H1 (cell line): ENCODE measurements at regions of chr14 and their contacts with region 1.

Region 1: DNA sequence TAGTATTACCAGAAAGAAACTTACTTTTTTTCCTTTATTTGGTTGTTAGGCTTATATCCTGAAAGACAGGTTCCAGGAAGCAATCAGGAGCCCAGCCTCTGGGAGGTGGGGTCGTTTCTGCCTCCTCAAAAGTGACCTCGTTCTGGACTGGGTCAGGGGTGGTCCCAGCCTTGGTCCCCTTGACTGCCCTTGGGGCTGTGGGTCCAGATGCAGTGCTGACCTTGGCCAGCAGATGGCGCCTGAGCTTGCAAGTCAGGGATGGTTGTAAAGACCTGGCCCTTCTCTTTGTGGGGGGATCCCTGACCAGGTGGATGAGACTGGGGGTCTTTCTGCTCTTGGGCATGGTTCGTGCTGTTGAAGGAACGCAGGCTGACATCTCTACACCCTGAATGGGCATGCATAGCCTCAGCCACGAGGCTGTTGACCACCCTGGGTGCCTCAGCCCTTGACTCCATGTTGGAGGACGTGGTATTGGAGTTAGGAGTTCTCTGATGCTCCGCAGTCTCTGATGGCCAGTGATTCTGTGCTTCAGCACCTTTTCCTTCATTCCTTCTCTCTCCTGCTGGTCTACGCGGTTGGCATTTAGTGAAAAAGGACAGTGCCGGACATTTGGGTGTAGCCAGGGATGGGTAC is 62.4 kb downstream of the ADCK1 start:
- DNase-seq: peak; percentile 77 to 99
- H3K4me3 ChIP-seq: no peak overlapping the region
- H3K27ac ChIP-seq: no peak overlapping the region
- H3K4me1 ChIP-seq: no peaks in the 10 kb centered on the region
- H3K27me3 ChIP-seq: no peaks in the 10 kb centered on the region
- CTCF ChIP-seq: peak; percentile 88 to 99 (median 99)
- EP300 ChIP-seq: no peak
- POLR2A ChIP-seq: no peak
- RAD21 ChIP-seq: peak; percentile 90 to 92

Region 2: GRCh38 chr14:77825895-77826519 is 36.3 kb before region 1 on chr14:
- CTCF ChIA-PET with region 1: interaction called, 12 read pairs
- POLR2A ChIA-PET with region 1: no interaction called
- DNase-seq: no peak
- H3K4me3 ChIP-seq: no peak overlapping the region
- H3K27ac ChIP-seq: no peak overlapping the region
- H3K4me1 ChIP-seq: no peaks in the 10 kb centered on the region
- H3K27me3 ChIP-seq: no peaks in the 10 kb centered on the region
- CTCF ChIP-seq: no peak
- EP300 ChIP-seq: no peak
- POLR2A ChIP-seq: no peak
- RAD21 ChIP-seq: no peak

Region 3: DNA sequence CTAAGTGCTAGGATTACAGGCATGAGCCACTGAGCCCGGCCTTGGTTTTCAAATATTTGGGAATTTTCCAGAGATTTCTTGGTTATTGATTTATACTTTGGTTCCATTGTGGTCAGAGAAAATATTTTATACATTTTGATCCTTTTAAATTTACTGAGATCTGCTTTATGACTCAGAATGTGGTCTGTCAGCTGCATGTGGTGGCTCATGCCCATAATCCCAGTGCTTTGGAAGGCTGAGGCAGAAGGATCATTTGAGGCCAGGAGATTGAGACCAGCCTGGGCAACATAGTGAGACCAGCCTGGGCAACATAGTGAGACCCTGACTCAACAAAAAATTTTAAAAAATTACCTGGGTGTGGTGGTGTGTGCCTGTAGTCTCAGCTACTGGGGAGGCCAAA is 12.6 kb before region 1 on chr14:
- CTCF ChIA-PET with region 1: interaction called, 14 read pairs
- POLR2A ChIA-PET with region 1: no interaction called
- DNase-seq: no peak
- H3K4me3 ChIP-seq: no peak overlapping the region
- H3K27ac ChIP-seq: no peak overlapping the region
- H3K4me1 ChIP-seq: no peaks in the 10 kb centered on the region
- H3K27me3 ChIP-seq: no peaks in the 10 kb centered on the region
- CTCF ChIP-seq: no peak
- EP300 ChIP-seq: no peak
- POLR2A ChIP-seq: no peak
- RAD21 ChIP-seq: no peak

Region 4: GRCh38 chr14:77872983-77873382 is 10.7 kb after region 1 on chr14:
- CTCF ChIA-PET with region 1: interaction called, 80 read pairs
- POLR2A ChIA-PET with region 1: no interaction called
- DNase-seq: no peak
- H3K4me3 ChIP-seq: no peak overlapping the region
- H3K27ac ChIP-seq: no peak overlapping the region
- H3K4me1 ChIP-seq: no peaks in the 10 kb centered on the region
- H3K27me3 ChIP-seq: no peaks in the 10 kb centered on the region
- CTCF ChIP-seq: no peak
- EP300 ChIP-seq: no peak
- POLR2A ChIP-seq: no peak
- RAD21 ChIP-seq: no peak

Region 5: GRCh38 chr14:77889971-77890442 is 27.7 kb after region 1 on chr14:
- CTCF ChIA-PET with region 1: interaction called, 11 read pairs
- POLR2A ChIA-PET with region 1: no interaction called
- DNase-seq: no peak
- H3K4me3 ChIP-seq: no peak overlapping the region
- H3K27ac ChIP-seq: no peak overlapping the region
- H3K4me1 ChIP-seq: no peaks in the 10 kb centered on the region
- H3K27me3 ChIP-seq: no peaks in the 10 kb centered on the region
- CTCF ChIP-seq: no peak
- EP300 ChIP-seq: no peak
- POLR2A ChIP-seq: no peak
- RAD21 ChIP-seq: no peak

Region 6: GRCh38 chr14:77980475-77981321 is 118.4 kb after region 1 on chr14:
- CTCF ChIA-PET with region 1: interaction called, 19 read pairs
- POLR2A ChIA-PET with region 1: no interaction called
- DNase-seq: peak in 1 of 2 experiments; percentile 80
- H3K4me3 ChIP-seq: peak overlapping the region; percentile 42 to 70 (median 62)
- H3K27ac ChIP-seq: no peak overlapping the region
- H3K4me1 ChIP-seq: peaks cover 5 to 12% (median 10%) of the 10 kb centered on the region in 4 experiments; a peak in 6 of 7 replicates
- H3K27me3 ChIP-seq: no peaks in the 10 kb centered on the region; a peak in 1 of 7 replicates
- CTCF ChIP-seq: no peak
- EP300 ChIP-seq: no peak
- POLR2A ChIP-seq: no peak
- RAD21 ChIP-seq: no peak